ENCODE measurements at regions of chr1 and their contacts with region 1.

Region 1: GRCh38 chr1:26351591-26352337 is 2.2 kb downstream of the CRYBG2 start:
- DNase-seq: peak; percentile 97
- ATAC-seq: peak; percentile 86
- H3K4me3 ChIP-seq: peak overlapping the region in 2 of 3 experiments; percentile 34 to 64; a peak in 4 of 6 replicates
- H3K27ac ChIP-seq: peak overlapping the region; percentile 100
- H3K4me1 ChIP-seq: peaks cover 89% of the 10 kb centered on the region
- H3K27me3 ChIP-seq: no peaks in the 10 kb centered on the region
- CTCF ChIP-seq: no peak
- EP300 ChIP-seq: no peak; a peak in 2 of 4 replicates
- POLR2A ChIP-seq: peak in 1 of 2 experiments; percentile 56; a peak in 2 of 4 replicates
- RAD21 ChIP-seq: peak; percentile 37

Region 2: DNA sequence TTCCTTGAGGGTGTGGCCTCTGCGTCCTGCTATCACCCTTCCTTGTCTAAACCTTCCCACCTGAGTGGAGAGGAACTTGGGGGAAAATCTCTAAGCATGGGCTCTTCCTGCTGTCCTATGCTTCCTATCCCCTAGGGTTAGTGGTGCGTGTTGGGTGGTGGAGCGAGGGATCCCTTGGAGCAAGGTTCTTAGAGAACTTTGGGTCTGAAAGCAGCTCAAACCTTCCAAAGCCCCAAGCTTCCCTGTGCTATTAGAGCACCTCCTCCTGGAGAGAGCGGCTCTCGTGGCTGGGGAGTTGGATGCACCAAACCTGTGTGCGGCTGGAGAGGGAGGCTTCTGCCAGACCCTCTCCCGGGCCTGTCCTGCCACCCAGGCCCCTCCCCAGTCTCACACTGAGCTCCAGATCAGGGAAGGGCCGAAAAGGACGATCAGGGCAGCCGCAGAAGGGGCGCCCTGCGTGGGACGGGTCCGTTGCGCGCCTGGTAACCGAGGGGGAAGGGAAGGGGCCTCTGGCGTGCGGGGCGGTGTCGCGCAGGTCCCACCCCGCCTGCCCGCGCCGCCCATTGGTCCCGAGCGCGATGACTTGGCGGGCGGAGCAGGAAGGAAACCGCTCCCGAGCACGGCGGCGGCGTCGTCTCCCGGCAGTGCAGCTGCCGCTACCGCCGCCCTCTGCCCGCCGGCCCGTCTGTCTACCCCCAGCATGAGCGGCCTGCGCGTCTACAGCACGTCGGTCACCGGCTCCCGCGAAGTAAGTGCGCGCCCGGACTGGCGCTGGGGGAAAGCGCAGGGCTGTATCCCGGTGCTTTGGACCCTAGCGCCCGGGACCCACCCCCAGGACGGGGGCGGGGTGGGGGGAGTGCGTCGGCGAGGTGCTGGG is 72.1 kb before region 1 on chr1 and contains the start of gene SH3BGRL3:
- CTCF ChIA-PET with region 1: no interaction called
- POLR2A ChIA-PET with region 1: interaction called, 13 read pairs
- in situ Hi-C with region 1: no loop called
- intact Hi-C with region 1: no loop called
- DNase-seq: peak; percentile 55
- ATAC-seq: peak; percentile 90
- H3K4me3 ChIP-seq: peak within 1 kb of the TSS; percentile 61 to 78 (median 68); a peak in 5 of 6 replicates
- H3K27ac ChIP-seq: peak within 1 kb of the TSS; percentile 51
- H3K4me1 ChIP-seq: peaks cover 39% of the 10 kb centered on the region
- H3K27me3 ChIP-seq: no peaks in the 10 kb centered on the region
- CTCF ChIP-seq: peak; percentile 66
- EP300 ChIP-seq: no peak
- POLR2A ChIP-seq: peak; percentile 51 to 77
- RAD21 ChIP-seq: peak; percentile 38; the same call in 1 of the 2 replicates
- total RNA-seq, gene SH3BGRL3: 12.2 and 13.4 TPM in 2 replicates

Region 3: GRCh38 chr1:26295194-26296138 is 56.3 kb before region 1 on chr1:
- CTCF ChIA-PET with region 1: no interaction called
- POLR2A ChIA-PET with region 1: no interaction called
- in situ Hi-C with region 1: no loop called
- intact Hi-C with region 1: no loop called
- DNase-seq: no peak
- ATAC-seq: no peak
- H3K4me3 ChIP-seq: no peak overlapping the region
- H3K27ac ChIP-seq: no peak overlapping the region
- H3K4me1 ChIP-seq: no peaks in the 10 kb centered on the region
- H3K27me3 ChIP-seq: no peaks in the 10 kb centered on the region
- CTCF ChIP-seq: no peak
- EP300 ChIP-seq: no peak
- POLR2A ChIP-seq: no peak
- RAD21 ChIP-seq: no peak

Region 4: GRCh38 chr1:26306290-26307229 is 45.2 kb before region 1 on chr1 and contains the start of gene UBXN11:
- CTCF ChIA-PET with region 1: no interaction called
- POLR2A ChIA-PET with region 1: interaction called, 3 read pairs
- in situ Hi-C with region 1: no loop called
- intact Hi-C with region 1: loop called (anchors 2 kb)
- DNase-seq: peak; percentile 96
- ATAC-seq: peak; percentile 99
- H3K4me3 ChIP-seq: peak within 1 kb of the TSS; percentile 90 to 98 (median 94)
- H3K27ac ChIP-seq: peak within 1 kb of the TSS; percentile 68
- H3K4me1 ChIP-seq: peaks cover 40% of the 10 kb centered on the region
- H3K27me3 ChIP-seq: no peaks in the 10 kb centered on the region; a peak in 1 of 5 replicates
- CTCF ChIP-seq: peak; percentile 24; the same call in 1 of the 2 replicates
- EP300 ChIP-seq: no peak
- POLR2A ChIP-seq: peak; percentile 39 to 67; a peak in 3 of 4 replicates
- RAD21 ChIP-seq: no peak
- total RNA-seq, gene UBXN11: 3.2 and 9.3 TPM in 2 replicates

Region 5: DNA sequence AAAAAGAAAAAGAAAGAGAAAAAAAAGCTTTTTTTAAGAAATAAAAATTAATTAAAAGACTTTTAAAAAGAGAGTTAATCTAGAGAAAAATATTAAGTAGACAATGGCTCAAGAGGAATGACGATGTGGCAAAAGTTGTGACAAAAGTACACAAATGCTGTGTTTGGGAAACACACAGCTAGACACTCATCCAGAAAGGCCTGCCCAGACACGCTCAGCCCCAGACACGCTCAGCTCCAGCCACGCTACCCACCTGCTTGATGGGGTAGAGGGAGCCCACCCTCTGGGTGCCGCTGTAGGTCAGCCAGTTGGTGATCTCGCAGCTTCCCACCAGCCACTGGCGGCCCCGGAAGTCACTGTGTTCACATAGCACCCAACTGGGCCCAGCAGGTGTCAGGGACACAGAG is 23.8 kb before region 1 on chr1:
- CTCF ChIA-PET with region 1: no interaction called
- POLR2A ChIA-PET with region 1: interaction called, 12 read pairs
- in situ Hi-C with region 1: no loop called
- intact Hi-C with region 1: no loop called
- DNase-seq: no peak
- ATAC-seq: peak; percentile 65
- H3K4me3 ChIP-seq: no peak overlapping the region
- H3K27ac ChIP-seq: no peak overlapping the region
- H3K4me1 ChIP-seq: no peaks in the 10 kb centered on the region
- H3K27me3 ChIP-seq: no peaks in the 10 kb centered on the region
- CTCF ChIP-seq: peak; percentile 67
- EP300 ChIP-seq: no peak
- POLR2A ChIP-seq: no peak
- RAD21 ChIP-seq: no peak

Region 6: GRCh38 chr1:26337206-26338024 is 14.3 kb before region 1 on chr1:
- CTCF ChIA-PET with region 1: no interaction called
- POLR2A ChIA-PET with region 1: interaction called, 20 read pairs
- in situ Hi-C with region 1: no loop called
- intact Hi-C with region 1: no loop called
- DNase-seq: no peak
- ATAC-seq: peak; percentile 53
- H3K4me3 ChIP-seq: no peak overlapping the region
- H3K27ac ChIP-seq: no peak overlapping the region
- H3K4me1 ChIP-seq: peaks cover 23% of the 10 kb centered on the region
- H3K27me3 ChIP-seq: no peaks in the 10 kb centered on the region
- CTCF ChIP-seq: no peak
- EP300 ChIP-seq: no peak
- POLR2A ChIP-seq: no peak
- RAD21 ChIP-seq: no peak

Region 7: GRCh38 chr1:26363549-26364448 is 12.0 kb after region 1 on chr1:
- CTCF ChIA-PET with region 1: no interaction called
- POLR2A ChIA-PET with region 1: interaction called, 65 read pairs
- in situ Hi-C with region 1: no loop called
- intact Hi-C with region 1: loop called (anchors 1 kb)
- DNase-seq: peak; percentile 71
- ATAC-seq: peak; percentile 77
- H3K4me3 ChIP-seq: 0 out of 6 replicates have a peak overlapping the region, but pooled peaks of 1 of the 3 experiments have one; percentile 18
- H3K27ac ChIP-seq: no peak overlapping the region
- H3K4me1 ChIP-seq: peaks cover 57% of the 10 kb centered on the region
- H3K27me3 ChIP-seq: peaks cover 0 to 1% of the 10 kb centered on the region in 2 experiments; a peak in 2 of 5 replicates
- CTCF ChIP-seq: peak; percentile 95
- EP300 ChIP-seq: no peak
- POLR2A ChIP-seq: no peak
- RAD21 ChIP-seq: peak; percentile 96

Region 8: DNA sequence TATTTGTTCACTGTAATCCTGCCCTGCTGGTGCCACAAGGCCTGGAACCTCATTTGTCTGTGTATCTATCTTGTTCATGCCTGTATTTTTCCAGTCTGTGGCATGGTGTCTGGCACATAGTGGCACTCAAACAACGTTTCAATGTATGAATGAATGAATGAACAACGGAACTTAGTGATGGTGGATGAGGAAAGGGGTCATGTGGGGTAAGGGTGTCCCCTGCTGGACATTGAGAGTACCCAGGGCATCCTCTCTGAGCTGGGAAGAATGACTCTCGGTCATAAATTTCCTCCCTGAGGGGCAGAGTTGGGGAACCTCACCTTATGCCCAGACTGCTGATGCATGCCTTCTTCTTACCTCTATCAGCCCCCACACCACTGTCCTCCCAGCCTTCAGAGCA is 39.7 kb after region 1 on chr1:
- CTCF ChIA-PET with region 1: no interaction called
- POLR2A ChIA-PET with region 1: interaction called, 10 read pairs
- in situ Hi-C with region 1: no loop called
- intact Hi-C with region 1: no loop called
- DNase-seq: peak; percentile 52
- ATAC-seq: peak; percentile 67
- H3K4me3 ChIP-seq: no peak overlapping the region
- H3K27ac ChIP-seq: no peak overlapping the region
- H3K4me1 ChIP-seq: peaks cover 55% of the 10 kb centered on the region
- H3K27me3 ChIP-seq: no peaks in the 10 kb centered on the region; a peak in 2 of 5 replicates
- CTCF ChIP-seq: peak; percentile 81
- EP300 ChIP-seq: no peak
- POLR2A ChIP-seq: no peak
- RAD21 ChIP-seq: peak; percentile 87